ENCODE measurements at regions of chr13 and their contacts with region 1.

Region 1: GRCh38 chr13:30708541-30708940 is 26.8 kb upstream of the ALOX5AP start:
- DNase-seq: no peak
- ATAC-seq: no peak
- H3K4me3 ChIP-seq: no peak overlapping the region
- H3K4me3 Mint-ChIP-seq: no peak overlapping the region
- H3K27ac ChIP-seq: no peak overlapping the region
- H3K27ac Mint-ChIP-seq: no peak overlapping the region
- H3K4me1 ChIP-seq: no peaks in the 10 kb centered on the region
- H3K4me1 Mint-ChIP-seq: no peaks in the 10 kb centered on the region
- H3K27me3 ChIP-seq: no peaks in the 10 kb centered on the region
- H3K27me3 Mint-ChIP-seq: no peaks in the 10 kb centered on the region
- CTCF ChIP-seq: no peak

Region 2: DNA sequence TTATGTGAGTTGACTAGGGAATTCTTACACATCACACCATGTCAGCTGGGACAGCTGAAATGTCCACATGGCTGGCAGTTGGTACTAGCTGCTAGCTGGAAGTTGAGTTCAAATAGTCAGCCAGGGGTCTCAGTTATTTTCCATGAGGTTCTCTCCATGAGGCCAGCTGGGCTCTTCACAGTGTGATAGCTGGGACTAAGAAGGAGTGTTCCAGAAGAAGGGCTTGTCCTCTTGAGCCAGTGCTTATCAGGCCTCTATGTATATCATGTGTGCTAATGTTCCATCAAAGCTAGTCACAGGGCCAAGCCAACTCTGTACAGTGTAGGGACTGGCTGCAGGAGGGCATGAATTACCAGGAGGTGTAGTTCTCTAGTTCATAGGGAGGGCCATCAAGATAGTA is 79.0 kb before region 1 on chr13:
- CTCF ChIA-PET with region 1: no interaction called
- POLR2A ChIA-PET with region 1: no interaction called
- intact Hi-C with region 1: no loop called
- DNase-seq: no peak
- ATAC-seq: no peak
- H3K4me3 ChIP-seq: no peak overlapping the region
- H3K4me3 Mint-ChIP-seq: no peak overlapping the region
- H3K27ac ChIP-seq: no peak overlapping the region
- H3K27ac Mint-ChIP-seq: no peak overlapping the region
- H3K4me1 ChIP-seq: peaks cover 14% of the 10 kb centered on the region
- H3K4me1 Mint-ChIP-seq: peaks cover 65% of the 10 kb centered on the region
- H3K27me3 ChIP-seq: no peaks in the 10 kb centered on the region
- H3K27me3 Mint-ChIP-seq: no peaks in the 10 kb centered on the region
- CTCF ChIP-seq: no peak

Region 3: DNA sequence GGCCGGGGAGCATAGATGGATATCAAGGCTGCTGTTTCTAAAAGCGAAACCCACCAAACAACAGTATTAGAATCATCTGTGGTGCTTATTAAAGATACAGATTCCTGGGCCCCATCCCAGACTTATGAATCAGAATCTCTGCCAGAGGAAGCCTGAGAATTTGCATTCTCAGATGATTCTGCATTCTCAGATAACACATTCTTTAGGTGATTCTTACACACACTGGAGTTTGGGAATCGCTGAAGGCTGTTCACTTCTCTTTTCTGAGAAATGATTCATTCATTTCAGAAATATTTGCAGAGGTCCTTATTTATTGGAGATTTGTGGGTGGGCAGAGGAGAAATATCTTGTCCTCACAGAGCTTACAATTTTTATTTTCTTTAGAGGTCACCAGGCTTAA is 51.2 kb after region 1 on chr13:
- CTCF ChIA-PET with region 1: no interaction called
- POLR2A ChIA-PET with region 1: no interaction called
- intact Hi-C with region 1: loop called in 1 of 2 experiments (anchors 5 kb)
- DNase-seq: no peak
- ATAC-seq: no peak
- H3K4me3 ChIP-seq: no peak overlapping the region
- H3K4me3 Mint-ChIP-seq: no peak overlapping the region
- H3K27ac ChIP-seq: no peak overlapping the region
- H3K27ac Mint-ChIP-seq: no peak overlapping the region
- H3K4me1 ChIP-seq: no peaks in the 10 kb centered on the region
- H3K4me1 Mint-ChIP-seq: no peaks in the 10 kb centered on the region
- H3K27me3 ChIP-seq: no peaks in the 10 kb centered on the region
- H3K27me3 Mint-ChIP-seq: no peaks in the 10 kb centered on the region
- CTCF ChIP-seq: no peak

Measured in CD4-positive, alpha-beta T cell (primary cell).